RWPE1 (cell line): ENCODE measurements at regions of chr17 and their contacts with region 1.

Region 1: DNA sequence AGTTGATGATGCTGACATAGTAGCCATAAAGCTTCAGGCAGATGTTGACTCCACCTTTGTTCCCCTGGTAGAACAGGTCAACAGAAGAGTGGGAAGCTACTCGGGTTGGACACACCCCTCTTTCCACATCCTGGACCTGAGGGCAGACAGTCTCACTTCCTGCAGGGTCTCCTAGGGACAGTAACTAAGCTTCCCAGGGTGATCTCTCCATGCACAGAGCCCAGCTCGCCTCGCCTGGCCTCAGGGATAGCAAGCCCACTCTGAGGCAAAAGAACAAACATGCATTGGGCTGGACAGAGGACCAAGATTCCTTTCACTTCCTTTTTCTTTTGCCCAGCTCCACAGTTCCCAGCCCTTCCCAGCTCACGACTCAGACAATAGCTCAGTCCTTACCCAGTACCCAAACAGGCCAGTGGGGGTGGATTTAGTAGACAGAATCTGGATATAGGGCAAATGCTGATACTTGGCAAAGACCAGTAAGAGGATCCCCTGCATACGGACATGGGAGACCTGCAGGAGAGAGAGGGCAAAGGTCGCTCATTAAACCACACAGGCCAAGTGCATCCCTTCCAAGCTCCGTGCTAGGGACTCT is 7.0 kb downstream of the INPP5K start:
- DNase-seq: no peak
- H3K27ac ChIP-seq: peak overlapping the region; percentile 46; the same call in 1 of the 2 replicates
- CTCF ChIP-seq: no peak

Region 2: DNA sequence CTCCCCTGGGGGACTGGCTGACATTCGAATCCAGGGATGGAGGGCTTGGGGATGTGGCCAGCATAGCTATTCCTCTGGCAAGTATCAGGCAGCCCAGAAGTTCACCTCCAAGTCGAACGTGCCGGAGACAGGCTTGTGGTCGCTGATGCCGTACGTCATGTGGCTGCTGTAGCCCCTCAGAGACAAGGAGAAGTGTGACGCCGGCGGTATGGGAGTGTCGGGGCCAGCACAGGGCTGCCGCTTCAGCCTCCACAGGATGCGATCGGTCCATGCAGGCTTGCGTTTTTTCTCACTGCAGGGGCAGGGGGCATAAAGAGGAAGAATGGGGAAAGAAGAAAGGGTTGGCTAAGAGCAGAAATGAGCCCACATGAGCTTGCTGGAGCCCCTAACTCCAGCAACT is 11.6 kb before region 1 on chr17:
- CTCF ChIA-PET with region 1: interaction called, 10 read pairs
- POLR2A ChIA-PET with region 1: no interaction called
- DNase-seq: no peak
- H3K27ac ChIP-seq: peak overlapping the region; percentile 73
- CTCF ChIP-seq: no peak